Left cardiac atrium (tissue), 4 donors: ENCODE measurements at regions of chrX and their contacts with region 1.

Region 1: GRCh38 chrX:22748093-22748999 is 251.4 kb upstream of the DDX53 start:
- DNase-seq: peak; percentile 25
- ATAC-seq: peak; percentile 68 to 72

Region 2: DNA sequence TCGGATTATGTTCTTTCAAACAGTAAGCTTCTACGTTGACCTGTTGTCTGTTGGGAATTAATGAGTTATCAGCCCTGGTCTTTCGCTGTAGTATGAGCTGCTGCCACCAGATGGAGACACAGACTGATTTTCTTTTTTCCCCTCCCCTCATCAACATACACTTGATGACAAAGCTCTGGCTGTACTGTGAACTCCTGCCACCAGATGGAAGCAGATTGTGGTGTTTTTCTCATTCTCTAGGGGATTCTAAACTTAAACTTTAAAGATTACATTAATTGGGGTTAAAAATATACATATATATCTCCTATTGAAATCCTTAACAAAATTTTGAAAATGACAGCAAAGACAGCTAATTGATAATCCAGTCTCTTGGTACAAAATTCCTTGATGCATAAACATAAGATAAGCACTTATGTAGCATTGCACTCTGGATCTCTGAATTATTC is 763.0 kb before region 1 on chrX:
- intact Hi-C with region 1: loop called in 1 of 2 experiments (anchors 5 kb)
- DNase-seq: peak; percentile 41
- ATAC-seq: peak; percentile 88

Region 3: GRCh38 chrX:22135994-22136684 is 612.2 kb before region 1 on chrX:
- intact Hi-C with region 1: loop called in 1 of 2 experiments (anchors 5 kb)
- DNase-seq: no peak
- ATAC-seq: peak; percentile 51 to 71